SK-N-SH (cell line): ENCODE measurements at regions of chr1 and their contacts with region 1.

Region 1: GRCh38 chr1:154198756-154199562 is 7.1 kb upstream of the TPM3 start:
- DNase-seq: peak; percentile 78
- H3K4me3 ChIP-seq: no peak overlapping the region
- H3K27ac ChIP-seq: no peak overlapping the region
- H3K4me1 ChIP-seq: peaks cover 0 to 2% of the 10 kb centered on the region in 2 experiments; a peak in 1 of 4 replicates
- H3K27me3 ChIP-seq: no peaks in the 10 kb centered on the region
- CTCF ChIP-seq: peak; percentile 64
- EP300 ChIP-seq: no peak
- RAD21 ChIP-seq: peak; percentile 70

Region 2: GRCh38 chr1:153658400-153659174 is 540.4 kb before region 1 on chr1 and contains the start of gene SNAPIN:
- CTCF ChIA-PET with region 1: no interaction called
- POLR2A ChIA-PET with region 1: no interaction called
- DNase-seq: peak; percentile 94
- H3K4me3 ChIP-seq: peak within 1 kb of the TSS; percentile 60 to 92
- H3K27ac ChIP-seq: peak within 1 kb of the TSS; percentile 58 to 83; a peak in 3 of 4 replicates
- H3K4me1 ChIP-seq: peaks cover 0 to 5% of the 10 kb centered on the region in 2 experiments; a peak in 1 of 4 replicates
- H3K27me3 ChIP-seq: no peaks in the 10 kb centered on the region
- CTCF ChIP-seq: 0 out of 2 replicates have a peak, but pooled peaks have one; percentile 12
- EP300 ChIP-seq: no peak
- RAD21 ChIP-seq: no peak
- polyA plus RNA-seq, gene SNAPIN: 57.6 and 61.7 TPM in 2 replicates

Region 3: GRCh38 chr1:154213274-154213673 is 14.3 kb after region 1 on chr1:
- CTCF ChIA-PET with region 1: interaction called, 31 read pairs
- POLR2A ChIA-PET with region 1: no interaction called
- DNase-seq: no peak
- H3K4me3 ChIP-seq: no peak overlapping the region
- H3K27ac ChIP-seq: no peak overlapping the region; a peak in 1 of 4 replicates
- H3K4me1 ChIP-seq: peaks cover 0 to under 1% of the 10 kb centered on the region in 2 experiments; a peak in 2 of 4 replicates
- H3K27me3 ChIP-seq: no peaks in the 10 kb centered on the region
- CTCF ChIP-seq: no peak
- EP300 ChIP-seq: no peak
- RAD21 ChIP-seq: no peak

Region 4: GRCh38 chr1:154219541-154219940 is 20.6 kb after region 1 on chr1:
- CTCF ChIA-PET with region 1: interaction called, 11 read pairs
- POLR2A ChIA-PET with region 1: interaction called, 4 read pairs
- DNase-seq: no peak
- H3K4me3 ChIP-seq: peak overlapping the region; percentile 84
- H3K27ac ChIP-seq: peak overlapping the region; percentile 95 to 99
- H3K4me1 ChIP-seq: peaks cover 15 to 30% of the 10 kb centered on the region in 2 experiments
- H3K27me3 ChIP-seq: no peaks in the 10 kb centered on the region
- CTCF ChIP-seq: no peak
- EP300 ChIP-seq: no peak
- RAD21 ChIP-seq: no peak

Region 5: DNA sequence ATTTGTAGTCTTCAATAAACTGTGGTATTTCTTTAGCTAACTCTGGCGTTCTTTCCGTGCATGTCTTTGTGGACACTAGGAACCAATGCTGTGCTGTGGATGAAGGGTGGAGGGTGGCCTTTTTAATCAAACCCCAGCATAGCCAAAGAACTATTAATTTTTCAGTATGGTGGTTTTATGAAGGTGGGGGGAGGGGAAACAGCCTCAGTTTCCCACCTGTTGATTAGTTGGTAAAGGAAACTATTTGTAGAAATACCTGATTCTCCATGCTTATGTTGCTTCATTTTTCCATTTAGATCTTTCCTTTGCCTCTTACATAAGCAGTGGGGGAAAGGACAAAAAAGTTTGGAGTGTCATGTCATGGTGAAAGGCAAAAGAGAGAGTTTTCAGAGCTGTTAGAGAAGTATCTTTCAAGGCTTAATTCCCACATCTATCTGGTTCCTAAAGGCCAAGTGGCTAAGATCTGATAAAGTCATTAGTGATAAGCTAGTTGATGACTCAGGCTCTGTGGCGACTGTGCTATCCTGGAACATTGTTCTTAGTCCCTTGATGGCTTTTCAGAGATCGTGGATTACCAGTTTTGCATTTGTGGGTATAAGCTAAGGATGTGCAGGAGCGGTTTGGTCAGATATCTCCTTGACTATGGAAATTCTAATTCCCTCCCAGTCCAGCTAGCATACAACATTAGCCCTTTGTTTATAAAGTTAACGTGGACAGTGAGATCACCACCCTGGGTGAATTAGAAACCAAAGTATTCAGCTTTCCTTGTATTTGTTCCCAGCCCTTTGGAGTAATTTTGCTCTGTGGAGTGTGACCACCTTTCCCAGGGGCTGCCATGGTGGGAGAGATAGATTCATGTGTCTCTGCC is 64.7 kb after region 1 on chr1:
- CTCF ChIA-PET with region 1: interaction called, 22 read pairs
- POLR2A ChIA-PET with region 1: no interaction called
- DNase-seq: no peak
- H3K4me3 ChIP-seq: no peak overlapping the region
- H3K27ac ChIP-seq: peak overlapping the region in 1 of 2 experiments; percentile 41; a peak in 3 of 4 replicates
- H3K4me1 ChIP-seq: peaks cover 5 to 9% of the 10 kb centered on the region in 2 experiments; a peak in 1 of 4 replicates
- H3K27me3 ChIP-seq: no peaks in the 10 kb centered on the region
- CTCF ChIP-seq: no peak
- EP300 ChIP-seq: no peak
- RAD21 ChIP-seq: no peak

Region 6: GRCh38 chr1:154272217-154272998 is 73.4 kb after region 1 on chr1 and contains the start of gene HAX1:
- CTCF ChIA-PET with region 1: interaction called, 49 read pairs
- POLR2A ChIA-PET with region 1: interaction called, 5 read pairs
- DNase-seq: peak; percentile 89
- H3K4me3 ChIP-seq: peak within 1 kb of the TSS; percentile 89 to 91
- H3K27ac ChIP-seq: peak within 1 kb of the TSS; percentile 71 to 89
- H3K4me1 ChIP-seq: peaks cover 0 to 9% of the 10 kb centered on the region in 2 experiments; a peak in 1 of 4 replicates
- H3K27me3 ChIP-seq: no peaks in the 10 kb centered on the region
- CTCF ChIP-seq: peak; percentile 97
- EP300 ChIP-seq: 0 out of 4 replicates have a peak, but pooled peaks of 1 of the 2 experiments have one; percentile 2
- RAD21 ChIP-seq: peak; percentile 79
- polyA plus RNA-seq, gene HAX1: 74.1 and 106 TPM in 2 replicates

Region 7: GRCh38 chr1:154760469-154760933 is 561.5 kb after region 1 on chr1:
- CTCF ChIA-PET with region 1: no interaction called
- POLR2A ChIA-PET with region 1: no interaction called
- DNase-seq: peak; percentile 91
- H3K4me3 ChIP-seq: peak overlapping the region; percentile 35 to 56
- H3K27ac ChIP-seq: no peak overlapping the region
- H3K4me1 ChIP-seq: no peaks in the 10 kb centered on the region; a peak in 1 of 4 replicates
- H3K27me3 ChIP-seq: peaks cover 26% of the 10 kb centered on the region
- CTCF ChIP-seq: peak; percentile 66
- EP300 ChIP-seq: no peak
- RAD21 ChIP-seq: peak; percentile 60